Gastrocnemius medialis (tissue), 4 donors: ENCODE measurements at regions of chr15 and their contacts with region 1.

Region 1: DNA sequence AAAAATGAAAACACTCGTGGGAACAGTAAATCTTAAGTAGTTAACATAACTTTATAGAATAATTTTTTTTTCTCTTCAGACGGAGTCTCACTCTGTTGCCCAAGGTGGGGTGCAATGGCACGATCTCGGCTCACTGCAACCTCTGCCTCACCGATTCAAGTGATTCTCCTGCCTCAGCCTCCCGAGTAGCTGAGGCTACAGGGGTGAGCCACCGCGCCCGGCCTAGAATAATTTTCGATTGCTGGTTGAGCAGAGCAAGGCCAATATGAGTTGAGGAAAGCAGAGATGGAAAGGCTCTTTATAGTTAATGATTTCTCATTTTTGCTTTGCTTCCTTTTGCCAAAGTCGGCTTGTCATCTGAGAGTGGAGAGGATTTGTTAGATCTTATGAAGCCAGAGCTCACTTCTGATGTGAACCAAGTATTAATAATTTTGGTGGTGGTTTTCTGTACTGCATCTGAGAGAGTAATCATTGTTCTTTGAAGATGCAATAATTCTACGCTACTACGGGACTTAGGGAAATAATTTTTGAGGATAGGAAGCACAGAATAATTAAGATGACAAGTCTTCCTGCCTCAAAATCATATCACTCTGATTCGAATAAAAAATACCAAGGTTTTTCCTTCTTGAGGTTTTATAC is 1.6 kb upstream of the GOLM2 start:
- DNase-seq: no peak
- ATAC-seq: no peak
- H3K4me3 ChIP-seq: peak overlapping the region; percentile 68 to 91 (median 80)
- H3K27ac ChIP-seq: peak overlapping the region in 2 of 4 donors; percentile 83 to 90
- H3K4me1 ChIP-seq: peaks cover 21 to 23% of the 10 kb centered on the region in 2 donors
- H3K27me3 ChIP-seq: peaks cover 0 to 5% (median 0%) of the 10 kb centered on the region in 3 donors
- CTCF ChIP-seq: peak in 2 of 5 experiments; percentile 10 to 32
- POLR2A ChIP-seq: no peak

Region 2: GRCh38 chr15:44426975-44427755 is 140.2 kb after region 1 on chr15 and contains the start of gene CTDSPL2:
- in situ Hi-C with region 1: no loop called
- intact Hi-C with region 1: loop called (anchors 1 kb)
- DNase-seq: peak; percentile 98 to 99
- ATAC-seq: peak; percentile 90 to 95
- H3K4me3 ChIP-seq: peak within 1 kb of the TSS; percentile 91 to 96 (median 94)
- H3K27ac ChIP-seq: peak within 1 kb of the TSS; percentile 93 to 99 (median 94)
- H3K4me1 ChIP-seq: peaks cover 19 to 28% of the 10 kb centered on the region in 2 donors
- H3K27me3 ChIP-seq: no peaks in the 10 kb centered on the region
- CTCF ChIP-seq: peak in 3 of 5 experiments; percentile 24 to 43 (median 28)
- POLR2A ChIP-seq: peak; percentile 36 to 54
- total RNA-seq, gene CTDSPL2: 18.3 to 26.1 (median 24.5) TPM